Colonic mucosa (tissue), 4 donors: ENCODE measurements at regions of chr4 and their contacts with region 1.

Region 1: GRCh38 chr4:6716018-6716911 is at the start of gene BLOC1S4:
- DNase-seq: peak; percentile 88
- H3K4me3 ChIP-seq: peak within 1 kb of the TSS; percentile 77
- H3K27ac ChIP-seq: peak within 1 kb of the TSS; percentile 92
- H3K4me1 ChIP-seq: no peaks in the 10 kb centered on the region
- H3K27me3 ChIP-seq: no peaks in the 10 kb centered on the region
- CTCF ChIP-seq: no peak
- total RNA-seq, gene BLOC1S4: 14.4 to 16.4 TPM

Region 2: GRCh38 chr4:6641971-6642320 is 74.3 kb before region 1 on chr4:
- intact Hi-C with region 1: loop called (anchors 2 kb)
- DNase-seq: no peak
- H3K4me3 ChIP-seq: peak overlapping the region; percentile 64
- H3K27ac ChIP-seq: peak overlapping the region; percentile 90
- H3K4me1 ChIP-seq: peaks cover 6% of the 10 kb centered on the region
- H3K27me3 ChIP-seq: no peaks in the 10 kb centered on the region
- CTCF ChIP-seq: no peak

Region 3: GRCh38 chr4:6873792-6874461 is 157.7 kb after region 1 on chr4:
- intact Hi-C with region 1: loop called (anchors 2 kb)
- DNase-seq: peak; percentile 80
- H3K4me3 ChIP-seq: no peak overlapping the region
- H3K27ac ChIP-seq: no peak overlapping the region
- H3K4me1 ChIP-seq: no peaks in the 10 kb centered on the region
- H3K27me3 ChIP-seq: no peaks in the 10 kb centered on the region
- CTCF ChIP-seq: peak; percentile 80

Region 4: GRCh38 chr4:6986781-6987587 is 270.7 kb after region 1 on chr4:
- intact Hi-C with region 1: loop called (anchors 10 kb)
- DNase-seq: peak; percentile 96
- H3K4me3 ChIP-seq: peak overlapping the region; percentile 65
- H3K27ac ChIP-seq: peak overlapping the region; percentile 96
- H3K4me1 ChIP-seq: peaks cover 14% of the 10 kb centered on the region
- H3K27me3 ChIP-seq: no peaks in the 10 kb centered on the region
- CTCF ChIP-seq: no peak

Region 5: DNA sequence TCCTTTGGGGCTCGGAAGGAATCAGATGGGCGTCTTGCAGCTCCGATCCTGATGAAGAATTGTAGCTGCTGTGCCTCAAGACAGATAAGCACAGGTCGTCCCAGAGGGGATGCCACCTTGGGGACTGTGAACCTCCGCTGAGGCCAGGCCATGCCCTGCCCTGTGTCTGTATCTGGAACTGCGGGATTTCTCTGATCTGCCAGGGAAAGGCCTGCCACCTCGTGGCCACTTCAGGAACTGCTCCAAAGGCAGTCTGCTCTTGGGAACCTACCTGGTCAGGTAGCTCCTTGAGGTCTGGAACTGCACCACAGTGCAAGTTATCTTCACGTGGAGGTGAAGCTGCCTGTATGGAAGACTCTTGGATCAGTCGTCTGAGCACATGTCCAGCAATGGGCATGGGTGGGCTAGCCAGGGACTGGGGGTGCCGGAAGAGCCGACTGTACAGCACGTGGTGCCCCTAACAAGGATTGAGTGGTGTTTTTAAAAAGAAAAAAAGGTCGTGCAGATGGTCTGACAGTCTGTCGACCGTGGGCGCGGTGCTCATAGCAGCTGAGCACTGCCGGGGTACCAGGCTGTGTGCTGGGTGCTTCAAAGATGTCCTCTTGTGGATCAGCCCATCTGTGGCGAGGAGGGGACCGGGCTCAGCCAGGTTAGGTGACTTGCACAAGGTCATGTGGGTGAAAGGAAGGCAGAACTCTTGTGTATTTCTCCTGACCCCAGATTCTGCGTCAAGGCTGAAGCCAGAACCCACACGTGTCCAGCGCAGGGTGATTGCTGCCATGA is 354.7 kb after region 1 on chr4:
- intact Hi-C with region 1: loop called (anchors 5 kb)
- DNase-seq: peak; percentile 92
- H3K4me3 ChIP-seq: no peak overlapping the region
- H3K27ac ChIP-seq: no peak overlapping the region
- H3K4me1 ChIP-seq: peaks cover 13% of the 10 kb centered on the region
- H3K27me3 ChIP-seq: no peaks in the 10 kb centered on the region
- CTCF ChIP-seq: peak; percentile 99